Activated T-helper 1 cell treated with anti-CD3 and anti-CD28 coated beads, Interleukin-12 subunit alpha, Interleukin-12 subunit beta, Interleukin-2, Interleukin-4 antibody, amounts not matched to agents 30 ng/mL and 10 ng/mL and 1 ng/mL, durations not matched to agents 14 hours and 24 hours and 36 hours (primary cell): ENCODE measurements at regions of chr17 and their contacts with region 1.

Region 1: DNA sequence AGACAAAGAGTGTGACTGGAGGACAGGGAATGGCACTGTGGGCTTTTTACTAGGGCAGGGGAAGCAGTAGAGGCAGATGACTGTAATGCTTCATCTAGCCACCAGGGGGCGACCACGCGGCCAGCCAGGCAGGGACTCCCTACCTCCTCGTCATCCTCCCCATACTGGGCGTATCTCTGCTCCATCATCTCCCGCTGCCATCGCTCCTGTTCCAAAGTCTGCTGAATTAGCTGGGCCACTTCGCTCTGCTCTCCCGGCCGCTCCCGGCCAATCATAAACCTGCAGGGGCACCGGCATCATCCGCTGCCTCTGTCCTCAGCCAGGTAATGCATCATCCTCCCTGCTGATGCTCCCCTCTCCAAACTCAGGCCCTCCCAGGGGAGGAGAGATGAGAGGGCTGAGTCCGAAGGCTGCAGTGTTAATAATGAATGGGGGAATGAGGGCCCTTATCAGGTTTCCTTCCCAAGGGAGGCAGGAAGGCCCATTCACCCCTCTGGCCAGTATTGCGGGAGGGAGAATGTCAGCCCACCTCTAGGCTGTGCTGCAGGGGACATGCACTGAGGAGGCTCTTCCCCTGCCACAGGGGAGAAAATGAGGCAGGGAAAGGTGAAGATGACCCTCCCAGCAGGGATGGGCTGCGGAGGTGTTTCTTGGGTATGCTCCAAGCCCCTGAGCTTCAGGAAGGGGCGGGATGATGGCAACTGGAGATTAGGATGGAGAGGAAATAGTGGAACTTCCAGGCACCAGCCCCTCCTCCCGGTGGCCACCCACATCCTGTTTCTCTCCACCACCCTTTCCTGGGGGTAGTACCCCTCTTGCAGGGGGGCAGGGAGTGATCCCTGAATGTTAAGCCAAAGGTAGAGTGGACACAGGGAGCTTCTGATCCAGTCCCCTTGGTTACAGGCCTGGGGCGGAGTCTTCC is 10.3 kb upstream of the SAMD14 start:
- DNase-seq: peak; percentile 74
- H3K4me3 Mint-ChIP-seq: peak overlapping the region; percentile 72
- H3K27ac Mint-ChIP-seq: peak overlapping the region; percentile 79
- H3K4me1 Mint-ChIP-seq: peaks cover 80% of the 10 kb centered on the region
- H3K27me3 Mint-ChIP-seq: no peaks in the 10 kb centered on the region

Region 2: DNA sequence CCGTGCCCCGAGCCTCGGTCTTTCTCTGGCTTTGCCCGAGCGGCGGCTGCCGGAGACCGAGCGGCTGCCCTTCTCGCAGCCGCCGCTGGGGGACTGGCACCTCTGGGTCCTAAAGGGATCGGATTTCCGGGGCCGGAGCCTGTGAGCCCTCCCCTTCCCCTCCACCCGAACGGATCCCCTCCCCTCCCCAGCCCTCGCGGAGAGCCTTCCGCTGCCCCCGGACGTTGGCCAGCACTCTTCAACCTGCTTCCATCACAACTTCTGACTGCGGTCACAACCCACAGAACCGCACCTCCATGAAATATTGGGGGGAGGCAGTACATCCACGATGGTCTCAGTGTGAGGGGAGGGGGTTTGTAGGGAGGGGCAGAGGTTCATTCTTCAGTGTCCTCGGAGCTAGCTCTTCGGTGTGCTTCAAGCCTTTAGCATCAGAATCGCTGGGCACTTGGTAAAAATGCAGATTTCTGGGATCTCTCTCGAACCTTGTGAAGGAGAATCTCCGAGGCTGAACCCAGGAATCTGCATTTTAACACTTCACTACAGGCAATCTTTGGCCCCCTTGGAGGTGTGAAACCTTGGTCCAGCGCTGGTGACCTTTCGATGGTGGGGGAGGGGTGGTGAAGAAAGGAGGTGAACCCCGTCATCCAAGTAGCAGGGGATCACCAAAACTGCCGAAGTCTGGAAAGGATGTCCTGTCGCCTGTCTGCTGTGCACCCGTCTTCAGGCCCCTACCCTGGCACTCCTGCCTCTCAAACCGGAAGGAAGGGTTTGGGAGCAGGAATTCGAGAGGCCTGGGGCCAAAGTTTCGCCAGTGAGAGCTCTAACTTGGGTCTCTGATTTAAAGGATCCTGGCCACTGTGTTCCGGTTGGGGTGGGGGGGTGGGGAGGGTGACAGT is 11.1 kb after region 1 on chr17:
- intact Hi-C with region 1: loop called (anchors 1 kb)
- DNase-seq: peak; percentile 86
- H3K4me3 Mint-ChIP-seq: peak overlapping the region; percentile 92
- H3K27ac Mint-ChIP-seq: peak overlapping the region; percentile 95
- H3K4me1 Mint-ChIP-seq: peaks cover 41% of the 10 kb centered on the region
- H3K27me3 Mint-ChIP-seq: no peaks in the 10 kb centered on the region

Region 3: DNA sequence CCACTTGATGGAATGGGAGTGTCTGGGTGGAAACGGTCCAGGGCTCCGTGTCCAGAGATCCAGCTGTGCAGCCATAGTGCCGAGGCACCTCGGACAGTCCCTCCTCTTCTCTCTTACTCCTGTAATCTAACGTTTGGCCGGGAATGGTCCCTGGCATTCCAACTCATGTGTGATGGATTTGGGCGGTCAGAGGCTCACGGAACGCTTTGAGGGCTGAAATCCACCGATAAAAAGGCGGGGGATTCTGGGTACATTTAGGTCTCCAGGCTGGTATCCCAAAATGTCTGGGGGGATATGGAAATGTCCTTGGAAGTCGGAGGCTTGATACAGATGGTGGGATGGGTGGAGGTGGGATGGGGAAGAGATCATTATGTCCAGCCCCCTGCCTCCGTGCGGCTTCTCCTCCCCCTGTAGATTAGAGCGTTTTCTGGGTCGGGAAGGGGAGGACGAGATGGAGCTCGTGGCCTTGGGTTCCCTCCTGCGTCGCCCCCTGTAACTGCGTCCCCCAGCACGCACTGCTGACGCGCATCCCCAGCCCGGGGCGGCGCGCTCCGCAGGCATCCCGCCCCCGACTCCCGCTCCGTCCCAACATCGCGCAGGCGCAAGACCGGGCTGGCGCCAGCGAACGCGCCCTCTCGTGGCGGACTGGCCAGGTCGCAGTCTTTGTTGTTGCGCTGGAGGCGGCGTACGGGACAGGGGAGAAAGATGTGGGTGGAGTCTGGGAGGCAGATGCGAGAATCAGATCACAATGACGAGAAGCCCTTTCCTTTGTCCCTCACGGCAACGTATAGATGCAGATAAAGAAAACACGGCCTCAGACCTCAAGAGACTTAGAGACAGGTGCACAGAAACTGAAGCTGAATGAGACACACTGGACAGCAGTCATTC is 21.1 kb after region 1 on chr17:
- intact Hi-C with region 1: loop called (anchors 1 kb)
- DNase-seq: peak; percentile 96
- H3K4me3 Mint-ChIP-seq: peak overlapping the region; percentile 67
- H3K27ac Mint-ChIP-seq: peak overlapping the region; percentile 96
- H3K4me1 Mint-ChIP-seq: peaks cover 39% of the 10 kb centered on the region
- H3K27me3 Mint-ChIP-seq: no peaks in the 10 kb centered on the region

Region 4: DNA sequence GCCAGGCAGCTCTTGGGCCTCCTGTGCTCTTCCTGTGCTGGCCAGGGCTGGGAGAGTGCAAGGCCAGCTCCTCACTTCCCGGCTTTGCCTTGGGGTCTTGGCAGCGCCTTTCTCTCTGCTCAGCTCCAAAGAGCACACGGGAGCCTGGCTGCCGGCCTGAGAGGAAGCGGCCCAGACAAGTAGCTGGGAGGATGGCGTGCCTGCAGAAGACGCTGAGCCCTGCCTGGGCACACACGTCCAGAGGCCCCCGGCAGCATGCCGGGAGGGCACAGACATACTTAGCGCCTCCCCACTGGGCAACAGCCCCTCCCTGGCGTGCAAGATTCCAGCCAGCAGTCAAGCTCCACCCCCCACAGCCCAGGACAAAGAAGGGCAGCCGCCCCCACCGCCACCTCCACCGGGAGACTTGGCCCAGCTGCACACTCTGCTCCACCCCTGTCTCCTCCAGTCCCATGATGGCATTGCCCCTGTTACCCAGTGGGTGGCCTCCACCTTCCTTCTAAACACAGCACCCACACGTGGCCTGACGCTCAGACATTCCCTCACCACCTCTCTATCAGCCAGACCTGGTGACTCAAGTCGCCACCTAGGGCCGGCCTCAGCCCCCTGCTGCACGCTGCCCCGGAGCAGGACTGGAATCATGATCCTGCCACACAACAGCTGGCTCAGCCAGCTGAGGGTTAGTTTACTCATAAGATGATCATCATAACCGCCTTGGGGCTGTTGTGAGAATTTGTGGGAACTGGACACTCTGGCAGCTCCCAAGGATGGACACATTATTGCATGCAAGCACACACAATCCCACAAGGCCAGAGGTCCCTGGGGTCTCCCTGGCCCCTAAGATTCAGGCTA is 38.0 kb after region 1 on chr17:
- intact Hi-C with region 1: loop called (anchors 1 kb)
- DNase-seq: no peak
- H3K4me3 Mint-ChIP-seq: peak overlapping the region; percentile 9
- H3K27ac Mint-ChIP-seq: peak overlapping the region; percentile 45
- H3K4me1 Mint-ChIP-seq: peaks cover 26% of the 10 kb centered on the region
- H3K27me3 Mint-ChIP-seq: peaks cover 19% of the 10 kb centered on the region

Region 5: DNA sequence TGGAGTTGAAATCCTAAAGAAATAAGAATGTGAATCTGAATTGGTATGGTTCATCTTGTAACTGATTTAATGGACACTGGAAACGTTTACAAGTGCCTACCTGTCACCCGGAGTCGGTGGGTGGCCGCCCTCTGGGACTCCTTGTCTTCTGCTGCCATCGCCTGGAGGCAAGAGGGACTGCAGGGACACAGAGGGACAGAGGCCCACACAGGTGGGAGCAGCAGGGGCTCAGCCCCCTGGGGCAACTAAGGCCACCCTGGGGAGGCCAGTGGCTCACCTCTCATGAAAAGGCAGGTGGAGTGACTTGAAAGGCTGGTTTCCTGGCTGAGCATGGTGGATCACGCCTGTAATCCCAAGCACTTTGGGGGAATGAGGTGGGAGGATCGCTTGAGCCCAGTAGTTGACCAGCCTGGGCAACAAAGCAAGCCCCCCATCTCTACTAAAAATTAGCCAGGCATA is 157.2 kb after region 1 on chr17:
- intact Hi-C with region 1: loop called (anchors 1 kb)
- DNase-seq: peak; percentile 69
- H3K4me3 Mint-ChIP-seq: no peak overlapping the region
- H3K27ac Mint-ChIP-seq: no peak overlapping the region
- H3K4me1 Mint-ChIP-seq: peaks cover 8% of the 10 kb centered on the region
- H3K27me3 Mint-ChIP-seq: peaks cover 3% of the 10 kb centered on the region